HEK293 (cell line): ENCODE measurements at regions of chr10 and their contacts with region 1.

Region 1: DNA sequence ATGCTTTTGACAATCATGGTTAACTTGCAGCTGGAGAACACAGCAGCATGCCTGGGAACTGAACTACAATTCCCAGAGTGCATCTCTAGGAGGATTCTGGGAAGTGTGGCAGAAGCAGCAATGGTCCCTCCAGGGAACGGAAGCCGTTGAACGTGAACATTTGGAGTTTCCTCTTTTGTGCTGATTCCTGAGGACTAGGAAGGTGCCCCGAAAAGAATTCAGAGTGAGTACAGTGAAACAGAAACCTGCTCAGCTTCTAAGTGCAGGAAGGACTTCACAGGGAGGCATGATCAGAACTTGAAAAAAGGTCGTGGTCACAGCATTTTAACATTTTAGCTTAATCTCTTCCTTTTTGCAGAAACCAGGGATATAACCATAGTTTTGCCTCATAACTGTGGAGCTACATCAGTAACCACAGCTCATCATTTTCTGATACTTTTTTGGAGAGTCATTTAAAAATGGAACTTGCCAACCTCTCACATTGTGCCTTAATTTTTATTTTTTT is at the start of gene NUDT13:
- H3K4me3 ChIP-seq: peak within 1 kb of the TSS; percentile 57
- H3K27ac ChIP-seq: peak within 1 kb of the TSS; percentile 27
- H3K4me1 ChIP-seq: no peaks in the 10 kb centered on the region
- CTCF ChIP-seq: no peak

Region 2: DNA sequence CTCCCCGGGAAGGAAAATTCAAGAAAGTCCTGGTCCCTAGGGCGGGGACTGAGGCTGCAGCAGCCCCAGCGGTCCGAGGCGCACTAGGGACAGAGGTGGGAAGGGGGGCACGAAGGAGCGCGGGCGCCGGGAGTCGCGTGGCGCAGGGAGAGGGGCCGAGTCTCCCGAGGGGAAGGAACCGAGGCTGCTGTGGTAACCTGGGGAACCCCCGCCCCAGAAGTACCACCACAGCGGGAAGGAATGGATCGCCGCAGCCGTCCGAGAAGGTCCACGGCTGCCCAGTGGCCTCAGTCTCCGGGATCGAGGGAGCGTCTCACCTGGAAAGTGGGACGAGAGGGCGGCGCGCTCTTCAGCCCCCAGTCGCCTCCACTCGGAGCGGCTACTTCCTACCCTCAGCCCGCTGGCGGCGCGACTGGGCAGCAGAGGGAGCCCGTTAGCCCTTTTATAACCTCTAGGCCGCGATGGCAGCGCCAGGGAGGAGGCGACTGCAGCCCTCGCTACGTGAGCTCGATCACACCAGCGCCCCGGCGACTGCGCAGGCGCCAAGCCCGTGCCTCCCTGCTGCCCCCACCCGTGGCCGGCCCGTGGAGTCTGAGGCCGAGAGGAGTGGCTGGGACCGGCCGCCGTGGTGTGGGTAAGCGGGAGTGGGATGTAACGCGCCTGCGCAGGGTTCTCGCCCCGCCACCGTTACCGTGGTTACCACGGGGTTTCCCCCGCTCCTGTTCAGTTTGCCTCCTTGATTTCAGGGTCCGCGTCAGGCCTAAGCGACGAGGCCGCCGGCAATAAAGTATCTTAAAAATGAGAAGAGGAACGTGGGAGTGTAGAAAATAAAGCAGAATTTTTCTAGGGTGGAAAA is 13.7 kb before region 1 on chr10 and contains the start of gene P4HA1:
- CTCF ChIA-PET with region 1: interaction called, 9 read pairs
- POLR2A ChIA-PET with region 1: interaction called, 52 read pairs
- H3K4me3 ChIP-seq: peak within 1 kb of the TSS; percentile 82
- H3K27ac ChIP-seq: peak within 1 kb of the TSS; percentile 90
- H3K4me1 ChIP-seq: no peaks in the 10 kb centered on the region; the same call in 1 of the 2 replicates
- CTCF ChIP-seq: peak; percentile 99

Region 3: DNA sequence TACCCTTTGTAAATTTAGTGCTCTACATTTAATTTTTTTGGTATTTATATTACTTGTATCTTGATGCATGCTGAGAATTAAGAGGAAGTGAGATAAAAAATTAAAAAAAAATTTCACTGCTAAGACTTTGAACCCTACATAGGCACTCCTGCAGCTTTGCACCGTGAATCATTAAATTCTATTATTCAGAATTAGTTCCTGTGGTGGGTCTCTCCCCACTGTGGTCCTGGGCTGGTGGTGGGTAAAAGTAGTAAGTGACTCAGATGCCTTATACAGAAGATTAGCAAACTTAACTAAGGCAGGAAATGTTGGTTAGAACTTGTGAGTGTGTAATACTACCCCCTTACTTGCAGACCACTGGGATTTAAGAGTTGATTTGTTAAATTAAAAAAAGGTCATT is 967.6 kb after region 1 on chr10:
- CTCF ChIA-PET with region 1: no interaction called
- POLR2A ChIA-PET with region 1: no interaction called
- H3K4me3 ChIP-seq: no peak overlapping the region
- H3K27ac ChIP-seq: no peak overlapping the region
- H3K4me1 ChIP-seq: peaks cover 10% of the 10 kb centered on the region
- CTCF ChIP-seq: no peak